A549 (cell line): ENCODE measurements at regions of chr2 and their contacts with region 1.

Region 1: GRCh38 chr2:120252225-120253021 is at the start of gene RALB:
- DNase-seq: peak; percentile 96
- ATAC-seq: peak; percentile 90 to 94
- H3K4me3 ChIP-seq: peak within 1 kb of the TSS; percentile 79
- H3K27ac ChIP-seq: peak within 1 kb of the TSS; percentile 92 to 98
- H3K4me1 ChIP-seq: peaks cover 11% of the 10 kb centered on the region
- CTCF ChIP-seq: no peak
- EP300 ChIP-seq: no peak
- POLR2A ChIP-seq: peak; percentile 56
- RAD21 ChIP-seq: no peak
- polyA plus RNA-seq, gene RALB: 65.9 and 72.9 TPM in 2 replicates

Region 2: DNA sequence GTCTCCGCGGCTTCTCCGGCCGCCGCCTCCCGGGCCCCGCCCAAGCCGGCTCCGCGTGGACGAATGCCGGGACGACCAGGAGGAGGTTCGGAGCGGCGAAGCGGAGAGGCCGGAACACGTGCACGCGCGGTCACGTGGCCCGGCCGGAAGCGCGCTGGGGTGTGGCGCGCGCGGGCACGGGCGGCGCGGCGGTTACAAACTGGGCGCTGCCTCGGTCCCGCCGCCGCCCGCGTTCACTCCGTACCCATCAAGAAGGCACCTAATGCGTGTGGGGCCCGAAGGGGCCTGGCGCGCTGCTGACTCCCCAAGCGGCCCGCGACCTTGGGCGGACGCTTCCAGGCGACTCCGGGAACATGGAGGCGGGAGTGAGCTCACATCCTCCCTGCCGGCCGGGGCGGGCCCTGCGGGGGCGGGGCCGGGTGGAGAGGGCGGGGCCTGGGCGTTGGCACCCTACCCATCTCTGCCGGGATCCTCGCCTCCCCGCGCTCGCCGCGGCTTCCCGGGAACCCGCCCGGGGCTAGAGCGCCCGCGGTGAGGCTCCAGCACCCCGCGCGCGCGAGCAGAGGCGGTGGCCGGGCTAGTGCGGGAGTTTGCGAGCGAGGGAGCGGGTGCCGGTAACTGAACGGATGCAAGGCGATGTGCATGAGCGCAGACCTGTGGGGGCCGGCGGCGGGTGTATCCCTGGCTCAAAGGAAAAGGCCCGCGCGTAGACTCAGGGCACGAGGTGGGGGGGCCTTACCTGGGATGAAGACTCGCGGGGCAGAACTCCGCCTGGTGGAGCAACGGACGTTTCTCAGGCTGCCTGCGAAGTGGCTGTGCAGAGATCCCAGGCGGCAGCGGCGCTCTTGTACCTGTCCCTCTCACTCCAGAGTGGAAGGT is 29.1 kb before region 1 on chr2 and contains the start of gene TMEM185B:
- CTCF ChIA-PET with region 1: interaction called, 4 read pairs
- POLR2A ChIA-PET with region 1: interaction called, 15 read pairs
- DNase-seq: peak; percentile 82 to 91
- ATAC-seq: peak; percentile 85 to 93
- H3K4me3 ChIP-seq: peak within 1 kb of the TSS; percentile 48
- H3K27ac ChIP-seq: peak within 1 kb of the TSS; percentile 93 to 94
- H3K4me1 ChIP-seq: peaks cover 22% of the 10 kb centered on the region
- CTCF ChIP-seq: peak; percentile 33; the same call in 1 of the 3 replicates
- EP300 ChIP-seq: no peak
- POLR2A ChIP-seq: peak; percentile 42
- RAD21 ChIP-seq: peak; percentile 20 to 54; a peak in 4 of 5 replicates
- polyA plus RNA-seq, gene TMEM185B: 41.8 and 48.5 TPM in 2 replicates

Region 3: DNA sequence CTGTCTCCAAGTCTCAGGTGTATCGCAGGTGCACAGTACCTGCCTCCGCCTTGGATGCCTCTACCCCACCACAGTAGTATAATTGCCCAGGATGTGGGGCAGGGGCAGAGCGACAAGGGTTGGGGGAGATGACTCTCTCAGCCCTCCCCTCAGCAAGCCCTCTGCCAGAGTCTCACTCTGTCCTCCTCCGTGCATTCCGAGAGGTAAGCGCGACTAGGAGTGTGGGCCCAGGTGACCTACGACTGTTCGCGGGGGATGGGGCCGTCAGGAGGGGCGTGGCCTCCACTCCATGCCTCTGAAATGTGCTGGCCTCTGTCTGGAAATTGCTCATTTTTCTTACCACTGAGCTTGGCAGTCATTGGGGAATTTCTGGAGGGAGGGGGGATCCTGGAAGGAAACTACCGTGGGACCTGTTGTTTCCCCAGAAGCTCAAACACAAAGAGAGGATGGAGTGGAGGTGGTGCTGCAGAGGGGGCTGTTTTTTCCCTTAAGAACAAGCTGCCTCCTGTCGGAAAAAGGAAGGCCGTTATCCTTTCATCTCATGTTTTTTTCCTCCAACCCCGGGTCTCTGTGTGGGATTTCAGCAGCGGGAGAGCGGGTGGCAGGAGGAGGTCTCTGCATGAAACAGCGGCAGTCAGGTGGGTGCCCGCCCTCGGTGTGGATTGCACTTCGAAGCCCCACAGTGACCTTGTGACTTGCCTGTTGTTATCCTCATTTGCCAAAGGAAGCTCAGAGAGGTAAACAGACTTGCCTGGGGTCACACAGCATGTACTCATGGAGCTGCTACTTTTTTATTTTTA is 12.7 kb before region 1 on chr2:
- CTCF ChIA-PET with region 1: interaction called, 10 read pairs
- POLR2A ChIA-PET with region 1: interaction called, 5 read pairs
- DNase-seq: peak; percentile 35 to 45
- ATAC-seq: peak in 1 of 2 experiments; percentile 26; a peak in 3 of 6 replicates
- H3K4me3 ChIP-seq: no peak overlapping the region
- H3K27ac ChIP-seq: peak overlapping the region; percentile 84 to 88
- H3K4me1 ChIP-seq: peaks cover 39% of the 10 kb centered on the region
- CTCF ChIP-seq: no peak
- EP300 ChIP-seq: no peak
- POLR2A ChIP-seq: peak; percentile 2; the same call in 1 of the 2 replicates
- RAD21 ChIP-seq: no peak

Region 4: DNA sequence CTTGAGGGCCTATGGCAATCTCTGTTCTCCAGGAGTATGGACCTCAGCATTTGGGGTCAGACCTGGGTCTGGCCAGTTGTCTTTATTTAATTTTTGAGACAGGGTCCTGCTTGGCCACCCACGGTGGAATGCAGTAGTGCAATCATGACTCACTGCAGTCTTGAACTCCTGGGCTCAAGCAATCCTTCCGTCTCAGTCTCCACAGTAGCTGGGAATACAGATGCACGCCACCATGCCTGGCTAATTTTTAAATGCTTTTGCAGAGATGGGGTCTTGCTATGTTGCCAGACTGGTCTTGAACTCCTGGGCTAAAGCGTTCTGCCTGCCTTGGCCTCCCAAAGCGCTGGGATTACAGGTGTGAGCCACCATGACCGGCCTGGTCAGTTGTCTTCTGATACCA is 47.1 kb after region 1 on chr2:
- CTCF ChIA-PET with region 1: no interaction called
- POLR2A ChIA-PET with region 1: no interaction called
- DNase-seq: no peak
- ATAC-seq: no peak
- H3K4me3 ChIP-seq: no peak overlapping the region
- H3K27ac ChIP-seq: no peak overlapping the region
- H3K4me1 ChIP-seq: no peaks in the 10 kb centered on the region
- CTCF ChIP-seq: no peak
- EP300 ChIP-seq: no peak
- POLR2A ChIP-seq: no peak
- RAD21 ChIP-seq: no peak